ENCODE measurements at regions of chr4 and their contacts with region 1.

Region 1: DNA sequence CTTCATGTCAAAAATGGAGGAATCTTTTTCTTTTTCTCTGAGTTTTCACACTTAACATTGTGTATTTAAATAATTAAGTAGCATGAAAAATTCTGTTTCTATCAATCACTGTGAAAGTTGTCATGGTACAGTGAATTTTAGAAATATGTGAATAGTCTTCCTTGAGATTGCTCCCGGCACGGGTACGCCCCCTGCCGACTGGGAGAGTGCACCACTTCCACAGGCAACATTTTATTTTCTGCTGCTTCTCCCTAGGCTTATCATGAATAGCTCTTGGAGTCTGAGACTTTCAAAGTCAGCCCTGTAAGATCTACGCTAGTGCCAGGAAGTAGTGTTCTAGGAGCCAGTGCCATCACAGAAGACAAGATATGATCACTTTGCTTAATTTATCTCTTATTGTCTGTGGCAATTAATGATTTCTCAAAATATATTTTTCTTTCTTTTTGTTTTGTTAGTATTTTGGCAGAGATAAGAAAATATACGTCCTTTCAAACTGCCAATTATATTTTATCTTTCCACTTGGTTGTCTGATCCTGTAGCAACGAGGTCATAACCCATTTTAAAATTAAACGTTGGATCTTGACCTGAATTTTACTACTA is 763.8 kb upstream of the AADAT start:
- DNase-seq: peak; percentile 42 to 67
- H3K4me3 ChIP-seq: no peak overlapping the region
- H3K4me3 Mint-ChIP-seq: no peak overlapping the region
- H3K27ac Mint-ChIP-seq: no peak overlapping the region
- H3K4me1 ChIP-seq: no peaks in the 10 kb centered on the region
- H3K4me1 Mint-ChIP-seq: no peaks in the 10 kb centered on the region
- H3K27me3 ChIP-seq: no peaks in the 10 kb centered on the region
- H3K27me3 Mint-ChIP-seq: no peaks in the 10 kb centered on the region
- CTCF ChIP-seq: peak; percentile 56 to 58

Region 2: DNA sequence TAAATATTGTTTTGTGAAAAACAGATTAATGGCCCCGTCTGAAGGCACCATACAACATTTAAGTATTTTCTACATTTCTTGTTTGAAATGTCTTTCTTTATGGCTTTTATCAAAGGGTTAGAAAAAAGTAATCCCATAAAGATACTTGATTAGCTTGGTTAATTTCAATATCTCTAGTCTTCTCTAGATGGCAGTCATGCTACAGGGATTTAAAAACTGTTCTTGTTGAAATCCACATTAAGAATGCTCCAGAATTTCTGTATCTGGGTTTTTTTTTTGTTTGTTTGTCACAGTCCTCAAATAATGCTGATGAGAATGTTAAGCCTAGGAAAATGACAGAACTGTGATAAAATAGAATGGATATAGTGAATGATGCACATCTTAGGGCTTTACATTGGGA is 654.8 kb before region 1 on chr4:
- CTCF ChIA-PET with region 1: interaction called, 5 read pairs
- POLR2A ChIA-PET with region 1: no interaction called
- intact Hi-C with region 1: loop called (anchors 5 kb)
- DNase-seq: no peak
- H3K4me3 ChIP-seq: no peak overlapping the region
- H3K4me3 Mint-ChIP-seq: no peak overlapping the region
- H3K27ac Mint-ChIP-seq: no peak overlapping the region
- H3K4me1 ChIP-seq: no peaks in the 10 kb centered on the region
- H3K4me1 Mint-ChIP-seq: no peaks in the 10 kb centered on the region
- H3K27me3 ChIP-seq: no peaks in the 10 kb centered on the region
- H3K27me3 Mint-ChIP-seq: no peaks in the 10 kb centered on the region
- CTCF ChIP-seq: no peak

Region 3: GRCh38 chr4:170259631-170260153 is 593.8 kb before region 1 on chr4:
- CTCF ChIA-PET with region 1: interaction called, 11 read pairs
- POLR2A ChIA-PET with region 1: no interaction called
- intact Hi-C with region 1: loop called (anchors 1 kb)
- DNase-seq: peak; percentile 82 to 86
- H3K4me3 ChIP-seq: no peak overlapping the region
- H3K4me3 Mint-ChIP-seq: no peak overlapping the region
- H3K27ac Mint-ChIP-seq: no peak overlapping the region
- H3K4me1 ChIP-seq: no peaks in the 10 kb centered on the region
- H3K4me1 Mint-ChIP-seq: no peaks in the 10 kb centered on the region
- H3K27me3 ChIP-seq: no peaks in the 10 kb centered on the region
- H3K27me3 Mint-ChIP-seq: no peaks in the 10 kb centered on the region
- CTCF ChIP-seq: peak; percentile 79 to 86

Region 4: GRCh38 chr4:170589597-170590191 is 263.8 kb before region 1 on chr4:
- CTCF ChIA-PET with region 1: interaction called, 6 read pairs
- POLR2A ChIA-PET with region 1: no interaction called
- intact Hi-C with region 1: loop called (anchors 1 kb)
- DNase-seq: peak in 1 of 2 experiments; percentile 18
- H3K4me3 ChIP-seq: no peak overlapping the region
- H3K4me3 Mint-ChIP-seq: no peak overlapping the region
- H3K27ac Mint-ChIP-seq: no peak overlapping the region
- H3K4me1 ChIP-seq: no peaks in the 10 kb centered on the region
- H3K4me1 Mint-ChIP-seq: no peaks in the 10 kb centered on the region
- H3K27me3 ChIP-seq: no peaks in the 10 kb centered on the region
- H3K27me3 Mint-ChIP-seq: no peaks in the 10 kb centered on the region
- CTCF ChIP-seq: peak; percentile 29 to 34

Region 5: GRCh38 chr4:170750515-170750914 is 103.0 kb before region 1 on chr4:
- CTCF ChIA-PET with region 1: no interaction called
- POLR2A ChIA-PET with region 1: no interaction called
- intact Hi-C with region 1: loop called (anchors 1 kb)
- DNase-seq: peak in 1 of 2 experiments; percentile 1
- H3K4me3 ChIP-seq: no peak overlapping the region
- H3K4me3 Mint-ChIP-seq: no peak overlapping the region
- H3K27ac Mint-ChIP-seq: no peak overlapping the region
- H3K4me1 ChIP-seq: no peaks in the 10 kb centered on the region
- H3K4me1 Mint-ChIP-seq: no peaks in the 10 kb centered on the region
- H3K27me3 ChIP-seq: no peaks in the 10 kb centered on the region
- H3K27me3 Mint-ChIP-seq: no peaks in the 10 kb centered on the region
- CTCF ChIP-seq: no peak

Region 6: DNA sequence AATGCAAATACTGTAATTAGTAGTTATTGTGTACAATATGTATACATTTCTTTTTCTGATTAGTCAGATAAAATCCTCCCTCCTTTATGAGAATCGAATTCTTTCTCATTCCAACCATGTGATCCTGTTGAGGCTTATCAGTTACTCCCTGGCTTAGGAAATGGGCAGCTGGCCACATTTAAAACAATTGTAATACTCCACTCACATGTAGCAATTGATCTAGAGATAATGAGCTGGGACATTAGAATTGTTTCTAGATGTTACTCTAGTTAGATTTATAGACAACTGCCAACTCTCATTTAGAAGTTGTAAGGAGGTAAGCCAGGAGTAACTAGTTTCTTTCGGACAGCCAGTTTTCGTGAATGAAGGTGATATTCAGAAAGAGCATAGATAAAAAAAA is 95.6 kb after region 1 on chr4:
- CTCF ChIA-PET with region 1: no interaction called
- POLR2A ChIA-PET with region 1: no interaction called
- intact Hi-C with region 1: no loop called
- DNase-seq: no peak
- H3K4me3 ChIP-seq: no peak overlapping the region
- H3K4me3 Mint-ChIP-seq: no peak overlapping the region
- H3K27ac Mint-ChIP-seq: no peak overlapping the region
- H3K4me1 ChIP-seq: no peaks in the 10 kb centered on the region
- H3K4me1 Mint-ChIP-seq: no peaks in the 10 kb centered on the region
- H3K27me3 ChIP-seq: no peaks in the 10 kb centered on the region
- H3K27me3 Mint-ChIP-seq: peaks cover 7% of the 10 kb centered on the region
- CTCF ChIP-seq: no peak

Measured in Caco-2 (cell line).